Lower leg skin (tissue), 4 donors: ENCODE measurements at regions of chr9 and their contacts with region 1.

Region 1: GRCh38 chr9:96327694-96328352 is 25.8 kb upstream of the HSD17B3 start:
- DNase-seq: peak in 1 of 2 donors; percentile 54
- H3K4me3 ChIP-seq: no peak overlapping the region
- CTCF ChIP-seq: peak in 2 of 3 donors; percentile 52 to 55
- POLR2A ChIP-seq: no peak

Region 2: DNA sequence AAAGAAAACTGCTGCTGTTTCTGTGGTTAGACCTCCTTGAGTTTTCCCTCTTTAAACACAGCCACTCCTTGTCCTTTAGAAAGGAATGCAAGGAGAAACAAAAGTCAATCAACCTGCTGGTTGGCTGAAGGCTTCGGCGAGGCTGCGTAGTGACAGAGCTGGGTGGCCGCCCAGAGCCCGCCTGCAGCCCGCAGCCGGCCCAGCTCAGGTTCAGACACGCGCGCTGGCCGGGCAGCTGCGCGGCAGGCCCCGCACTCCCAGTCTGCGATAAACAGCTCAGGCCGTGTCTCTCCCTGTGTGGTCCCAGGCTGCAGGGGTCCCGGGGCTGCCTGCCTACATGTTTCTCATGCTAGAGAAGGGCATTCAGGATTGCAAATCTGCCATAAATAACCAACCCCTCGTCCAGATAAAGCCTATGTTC is 141.2 kb before region 1 on chr9:
- intact Hi-C with region 1: no loop called
- DNase-seq: no peak
- H3K4me3 ChIP-seq: no peak overlapping the region
- CTCF ChIP-seq: no peak
- POLR2A ChIP-seq: no peak

Region 3: DNA sequence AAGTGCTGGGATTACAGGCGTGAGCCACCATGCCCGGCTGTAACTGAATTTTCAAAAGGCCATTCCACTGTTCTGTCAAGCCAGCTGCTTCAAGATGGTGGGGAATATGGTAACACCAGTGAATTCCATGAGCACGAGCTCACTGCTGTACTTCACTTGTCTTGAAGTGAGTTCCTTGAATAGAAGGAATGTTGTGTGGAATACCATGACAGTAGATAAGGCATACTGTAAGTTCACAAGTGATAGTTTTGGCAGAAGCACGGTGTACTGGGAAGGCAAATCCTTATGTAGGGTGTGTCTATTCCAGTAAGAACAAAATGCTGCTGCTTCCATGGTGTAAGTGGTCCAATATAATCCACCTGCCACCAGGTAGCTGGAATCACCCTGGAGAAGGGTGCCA is 333.9 kb after region 1 on chr9:
- intact Hi-C with region 1: loop called (anchors 10 kb)
- DNase-seq: no peak
- H3K4me3 ChIP-seq: no peak overlapping the region
- CTCF ChIP-seq: no peak
- POLR2A ChIP-seq: no peak